Caco-2 (cell line): ENCODE measurements at regions of chr11 and their contacts with region 1.

Region 1: GRCh38 chr11:80727315-80728230 is 1286.7 kb upstream of the TENM4 start:
- DNase-seq: peak; percentile 56 to 58
- H3K4me3 ChIP-seq: no peak overlapping the region
- H3K4me3 Mint-ChIP-seq: no peak overlapping the region
- H3K27ac Mint-ChIP-seq: no peak overlapping the region
- H3K4me1 ChIP-seq: no peaks in the 10 kb centered on the region
- H3K4me1 Mint-ChIP-seq: peaks cover 6% of the 10 kb centered on the region
- H3K27me3 ChIP-seq: no peaks in the 10 kb centered on the region
- H3K27me3 Mint-ChIP-seq: peaks cover 2% of the 10 kb centered on the region
- CTCF ChIP-seq: peak in 1 of 2 experiments; percentile 77

Region 2: DNA sequence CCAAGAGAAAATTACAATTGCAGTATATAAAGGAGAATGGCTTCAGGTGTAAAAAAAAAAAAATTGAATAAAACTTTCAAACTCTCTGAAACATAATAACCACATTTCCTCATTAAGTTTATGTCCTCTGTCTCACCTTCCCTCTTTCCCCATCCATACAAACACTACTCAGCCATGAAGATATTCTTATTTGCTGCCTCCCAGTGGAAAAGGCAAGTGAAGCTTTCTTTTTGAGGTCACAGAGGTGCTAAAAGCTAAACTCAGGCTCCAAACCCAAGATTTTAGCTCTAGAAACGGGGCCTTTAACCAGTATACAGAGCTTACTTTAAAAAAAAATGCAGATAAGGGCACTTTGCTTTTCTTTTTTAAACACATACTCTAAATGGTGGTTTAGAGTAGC is 437.6 kb after region 1 on chr11:
- CTCF ChIA-PET with region 1: interaction called, 3 read pairs
- POLR2A ChIA-PET with region 1: no interaction called
- intact Hi-C with region 1: loop called (anchors 1 kb)
- DNase-seq: peak in 1 of 2 experiments; percentile 42
- H3K4me3 ChIP-seq: no peak overlapping the region
- H3K4me3 Mint-ChIP-seq: no peak overlapping the region
- H3K27ac Mint-ChIP-seq: no peak overlapping the region
- H3K4me1 ChIP-seq: no peaks in the 10 kb centered on the region
- H3K4me1 Mint-ChIP-seq: no peaks in the 10 kb centered on the region
- H3K27me3 ChIP-seq: no peaks in the 10 kb centered on the region
- H3K27me3 Mint-ChIP-seq: peaks cover 6% of the 10 kb centered on the region
- CTCF ChIP-seq: peak in 1 of 2 experiments; percentile 59